ENCODE measurements at regions of chr5 and their contacts with region 1.

Region 1: GRCh38 chr5:18375641-18376040 is 741.4 kb downstream of the TAF11L14 start:
- DNase-seq: no peak
- H3K4me3 ChIP-seq: no peak overlapping the region
- H3K27ac ChIP-seq: no peak overlapping the region
- H3K4me1 ChIP-seq: no peaks in the 10 kb centered on the region
- H3K27me3 ChIP-seq: no peaks in the 10 kb centered on the region
- CTCF ChIP-seq: no peak
- EP300 ChIP-seq: no peak
- POLR2A ChIP-seq: no peak

Region 2: GRCh38 chr5:18354828-18355227 is 20.8 kb before region 1 on chr5:
- in situ Hi-C with region 1: no loop called
- intact Hi-C with region 1: no loop called
- DNase-seq: no peak
- H3K4me3 ChIP-seq: no peak overlapping the region
- H3K27ac ChIP-seq: no peak overlapping the region
- H3K4me1 ChIP-seq: no peaks in the 10 kb centered on the region
- H3K27me3 ChIP-seq: no peaks in the 10 kb centered on the region
- CTCF ChIP-seq: no peak
- EP300 ChIP-seq: no peak
- POLR2A ChIP-seq: no peak

Region 3: DNA sequence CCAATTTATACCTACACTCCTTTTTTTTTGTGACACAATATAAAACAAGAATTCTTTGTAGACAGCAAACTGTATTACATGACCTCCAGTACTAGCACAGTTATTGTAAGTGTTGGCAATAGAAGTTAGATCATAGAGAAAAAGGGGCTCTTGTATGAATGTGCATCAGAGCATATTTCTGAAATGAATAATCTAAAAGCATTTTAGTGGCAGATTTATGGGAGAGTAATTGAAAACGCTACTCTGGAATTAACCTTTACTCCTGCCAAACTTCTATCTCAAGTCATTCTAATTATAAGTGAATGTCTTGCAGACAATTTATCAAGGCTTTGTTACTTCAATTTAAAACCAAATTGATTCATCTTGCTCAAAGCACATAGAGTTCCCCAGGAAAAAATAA is 226.8 kb after region 1 on chr5:
- in situ Hi-C with region 1: no loop called
- intact Hi-C with region 1: loop called (anchors 5 kb)
- DNase-seq: no peak
- H3K4me3 ChIP-seq: no peak overlapping the region
- H3K27ac ChIP-seq: no peak overlapping the region
- H3K4me1 ChIP-seq: no peaks in the 10 kb centered on the region
- H3K27me3 ChIP-seq: no peaks in the 10 kb centered on the region
- CTCF ChIP-seq: no peak
- EP300 ChIP-seq: no peak
- POLR2A ChIP-seq: no peak